ENCODE measurements at regions of chr3 and their contacts with region 1.

Region 1: DNA sequence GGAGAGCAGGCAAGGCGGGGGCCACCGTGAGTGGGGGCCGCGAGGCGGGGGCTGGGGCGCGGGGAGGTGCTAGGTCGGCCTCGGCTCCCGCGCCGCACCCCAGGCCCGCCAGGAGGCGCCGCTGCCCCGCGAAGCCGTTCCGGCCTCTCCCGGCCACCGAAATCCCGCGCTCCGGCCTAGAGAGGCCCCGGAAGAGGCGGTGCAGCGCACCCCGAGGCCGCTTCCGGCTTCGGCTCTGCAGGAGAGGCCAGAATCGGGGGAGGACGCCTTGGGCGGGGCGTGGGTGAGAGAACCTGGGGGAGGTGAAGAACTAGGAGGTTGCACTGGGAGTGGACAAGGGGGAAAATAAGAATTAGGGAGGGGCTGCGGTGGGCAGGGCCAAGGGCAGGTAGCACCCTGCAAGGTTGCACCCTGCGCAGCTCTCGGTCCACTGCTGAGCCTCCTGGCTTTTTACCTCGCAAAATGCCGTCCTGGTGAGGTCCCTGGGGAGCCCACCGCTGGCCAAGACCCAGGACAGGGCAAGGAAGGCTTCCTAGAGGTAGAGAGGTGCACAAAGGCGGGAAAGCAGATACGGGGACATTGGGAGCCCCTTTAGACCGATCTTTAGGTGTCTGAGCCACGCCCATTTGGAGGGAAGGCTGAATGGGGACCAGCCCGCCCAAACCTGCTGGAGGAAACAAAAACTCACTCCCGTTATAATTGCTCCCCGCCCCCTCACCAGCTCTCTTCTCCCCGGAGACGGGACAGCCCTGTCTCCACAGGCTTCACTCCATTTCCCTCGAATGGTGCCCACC is 8.4 kb upstream of the GNAI2 start:
- DNase-seq: peak; percentile 95 to 98
- H3K4me3 ChIP-seq: peak overlapping the region; percentile 59 to 82 (median 64)
- H3K27ac ChIP-seq: peak overlapping the region; percentile 75 to 85 (median 83)
- H3K4me1 ChIP-seq: peaks cover 13 to 30% (median 28%) of the 10 kb centered on the region in 4 donors
- H3K27me3 ChIP-seq: no peaks in the 10 kb centered on the region
- CTCF ChIP-seq: peak in 5 of 7 experiments; percentile 69 to 97 (median 91)
- EP300 ChIP-seq: no peak
- POLR2A ChIP-seq: no peak

Region 2: GRCh38 chr3:50272911-50273693 is 45.5 kb after region 1 on chr3:
- intact Hi-C with region 1: loop called (anchors 10 kb)
- DNase-seq: peak; percentile 93 to 95
- H3K4me3 ChIP-seq: peak overlapping the region; percentile 32 to 47 (median 38)
- H3K27ac ChIP-seq: peak overlapping the region; percentile 37 to 88 (median 41)
- H3K4me1 ChIP-seq: peaks cover 52 to 77% (median 69%) of the 10 kb centered on the region in 4 donors
- H3K27me3 ChIP-seq: peaks cover 0 to 40% (median 26%) of the 10 kb centered on the region in 3 donors
- CTCF ChIP-seq: peak in 6 of 7 experiments; percentile 69 to 100 (median 98)
- EP300 ChIP-seq: no peak
- POLR2A ChIP-seq: no peak

Measured in stomach (tissue), 19 donors.